Ascending aorta (tissue), 2 donors: ENCODE measurements at regions of chr4 and their contacts with region 1.

Region 1: DNA sequence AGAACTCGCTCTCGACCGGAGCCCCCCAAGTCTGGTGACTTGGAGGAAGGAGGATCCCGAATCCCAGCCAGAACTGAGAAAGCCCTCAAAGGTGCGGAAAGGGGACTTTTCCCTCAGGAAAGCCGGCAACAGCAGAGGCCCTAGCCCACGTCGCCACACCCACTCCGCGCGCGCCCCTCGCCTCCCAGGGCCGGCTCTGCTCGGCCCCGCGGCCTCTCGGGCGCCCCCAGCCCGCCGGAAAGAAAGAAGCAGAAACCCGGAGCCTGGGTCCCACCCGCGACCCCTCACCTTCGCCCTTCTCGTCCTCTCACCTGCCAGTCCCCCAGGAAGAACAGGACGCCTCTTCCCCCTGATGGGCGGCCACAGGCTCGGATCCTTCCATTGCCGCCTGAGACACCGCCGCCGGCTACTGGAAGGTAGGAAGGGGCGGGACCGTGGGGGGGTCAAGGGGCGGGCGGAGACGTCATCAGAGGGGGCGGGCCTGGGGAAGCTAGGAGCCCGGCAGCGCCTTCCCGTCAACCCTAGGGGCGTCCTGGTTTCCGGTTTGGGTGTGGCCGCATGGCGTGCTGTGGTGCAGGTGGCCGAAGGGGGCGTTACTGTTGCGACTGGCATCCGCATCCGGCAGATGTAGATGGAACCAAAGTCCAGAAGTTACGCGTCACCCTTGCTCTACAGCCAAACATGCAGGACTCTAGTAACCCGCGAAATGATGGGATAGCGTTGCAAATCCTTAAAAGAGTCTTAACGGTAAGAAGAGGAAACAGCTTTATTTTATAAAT is at the start of gene UBA6:
- DNase-seq: peak; percentile 87 to 98
- H3K4me3 ChIP-seq: peak within 1 kb of the TSS; percentile 77 to 93
- H3K27ac ChIP-seq: peak within 1 kb of the TSS; percentile 94
- H3K4me1 ChIP-seq: peaks cover 0 to 3% of the 10 kb centered on the region in 2 donors
- H3K27me3 ChIP-seq: no peaks in the 10 kb centered on the region
- CTCF ChIP-seq: peak in 2 of 3 experiments; percentile 10 to 39
- total RNA-seq, gene UBA6: 5.1 TPM

Region 2: DNA sequence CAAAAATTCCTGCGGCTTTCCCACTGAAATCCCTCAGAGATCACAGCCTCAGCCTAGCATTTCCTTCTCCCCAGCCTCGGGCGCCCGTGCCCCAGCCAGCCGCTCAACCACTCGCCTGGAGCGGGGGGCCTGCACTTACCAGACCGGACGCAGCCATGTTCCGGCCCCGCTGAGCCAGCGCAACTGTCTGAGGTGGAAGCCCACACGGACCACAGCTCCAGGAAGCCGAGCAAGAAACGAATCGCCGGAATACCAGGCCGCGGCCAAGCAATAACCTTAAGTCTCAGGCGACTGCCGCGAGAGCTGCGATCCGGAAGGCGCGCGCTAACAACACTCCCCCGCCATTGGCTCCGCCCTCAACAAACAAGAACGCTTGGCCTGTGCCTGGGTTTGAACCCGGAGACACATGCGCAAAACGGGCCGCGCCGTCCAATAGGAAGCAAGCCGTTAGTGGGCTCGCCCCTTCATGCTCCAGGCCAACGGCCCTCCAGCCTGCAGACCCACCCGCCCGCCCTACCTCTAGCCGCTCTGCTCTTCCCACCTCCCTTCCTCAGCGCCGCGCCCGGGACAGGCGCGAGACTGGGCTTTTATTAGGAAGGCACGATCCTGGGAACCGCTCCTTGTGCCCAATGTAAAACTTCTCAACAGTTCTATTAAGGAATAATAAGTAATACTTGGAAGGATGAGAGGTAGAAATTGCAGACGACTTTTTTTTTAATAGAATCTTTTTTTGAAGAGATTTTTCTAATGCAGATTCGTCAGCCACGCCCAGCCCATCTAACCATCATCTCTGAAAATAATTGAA is 155.5 kb before region 1 on chr4 and contains the start of gene CENPC:
- intact Hi-C with region 1: loop called (anchors 1 kb)
- DNase-seq: peak; percentile 87 to 98
- H3K4me3 ChIP-seq: peak within 1 kb of the TSS; percentile 71 to 91
- H3K27ac ChIP-seq: peak within 1 kb of the TSS; percentile 93 to 95
- H3K4me1 ChIP-seq: peaks cover 0 to 7% of the 10 kb centered on the region in 2 donors
- H3K27me3 ChIP-seq: no peaks in the 10 kb centered on the region
- CTCF ChIP-seq: no peak
- total RNA-seq, gene CENPC: 5.7 TPM

Region 3: DNA sequence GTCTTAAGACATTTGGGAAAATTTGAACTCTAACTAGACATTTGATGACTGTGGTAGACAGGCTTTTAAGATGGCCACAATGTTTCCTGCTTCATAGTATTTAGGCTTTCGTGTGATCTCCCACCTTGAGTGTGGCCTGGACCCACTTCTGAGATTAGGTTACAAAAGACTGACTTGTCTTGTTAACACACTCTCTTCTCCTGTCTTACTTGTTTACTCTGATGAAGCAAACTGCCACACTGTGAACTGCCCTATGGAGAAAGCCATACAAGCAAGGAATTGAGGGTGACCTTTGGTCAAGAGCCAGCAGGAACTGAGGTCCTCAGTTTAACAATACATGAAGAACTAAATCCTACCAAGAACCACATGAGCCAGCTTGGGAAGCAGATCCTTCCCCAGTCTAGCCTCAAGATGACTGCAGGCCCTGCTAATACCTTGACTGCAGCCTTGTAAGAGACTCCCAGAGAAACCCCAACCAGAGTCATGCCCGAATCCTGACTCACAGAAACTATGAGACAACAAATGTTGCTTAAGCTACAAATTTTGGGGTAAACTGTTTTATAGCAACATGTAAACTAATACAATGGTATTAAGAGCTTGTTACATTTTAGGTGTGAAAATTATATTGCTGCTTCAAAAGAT is 20.2 kb before region 1 on chr4:
- intact Hi-C with region 1: no loop called
- DNase-seq: no peak
- H3K4me3 ChIP-seq: no peak overlapping the region
- H3K27ac ChIP-seq: no peak overlapping the region
- H3K4me1 ChIP-seq: no peaks in the 10 kb centered on the region
- H3K27me3 ChIP-seq: no peaks in the 10 kb centered on the region
- CTCF ChIP-seq: no peak

Region 4: GRCh38 chr4:67746797-67747495 is 46.0 kb after region 1 on chr4:
- intact Hi-C with region 1: loop called (anchors 5 kb)
- DNase-seq: no peak
- H3K4me3 ChIP-seq: peak overlapping the region in 1 of 2 donors; percentile 20
- H3K27ac ChIP-seq: peak overlapping the region; percentile 43 to 73
- H3K4me1 ChIP-seq: peaks cover 0 to 3% of the 10 kb centered on the region in 2 donors
- H3K27me3 ChIP-seq: no peaks in the 10 kb centered on the region
- CTCF ChIP-seq: peak; percentile 10 to 69 (median 65)